Astrocyte of the cerebellum (primary cell): ENCODE measurements at regions of chr4 and their contacts with region 1.

Region 1: GRCh38 chr4:85543832-85544231 is 68.9 kb downstream of the ARHGAP24 start:
- DNase-seq: no peak
- H3K4me3 ChIP-seq: no peak overlapping the region
- CTCF ChIP-seq: no peak

Region 2: GRCh38 chr4:85457752-85458467 is 85.9 kb before region 1 on chr4:
- in situ Hi-C with region 1: no loop called
- DNase-seq: no peak
- H3K4me3 ChIP-seq: no peak overlapping the region
- CTCF ChIP-seq: no peak

Region 3: DNA sequence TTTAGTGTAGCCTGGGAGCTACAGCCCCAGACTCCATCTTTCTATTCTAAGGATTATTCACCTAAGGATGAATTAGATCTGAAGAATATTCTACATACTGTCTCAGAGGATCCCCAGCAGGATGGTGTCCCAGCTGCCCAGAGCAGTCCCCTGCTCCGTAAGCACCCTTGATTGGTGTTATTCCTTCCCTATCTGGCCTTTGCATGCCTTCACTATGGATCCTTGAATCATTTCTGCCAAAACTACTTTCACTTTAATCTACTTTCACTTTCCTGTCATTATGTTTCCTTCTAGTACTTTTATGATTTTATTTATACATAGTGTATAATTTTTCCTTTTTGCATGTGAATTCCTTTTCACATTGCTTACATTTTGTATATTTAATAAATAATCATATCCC is 29.7 kb before region 1 on chr4:
- in situ Hi-C with region 1: loop called (anchors 5 kb)
- DNase-seq: no peak
- H3K4me3 ChIP-seq: no peak overlapping the region
- CTCF ChIP-seq: no peak

Region 4: DNA sequence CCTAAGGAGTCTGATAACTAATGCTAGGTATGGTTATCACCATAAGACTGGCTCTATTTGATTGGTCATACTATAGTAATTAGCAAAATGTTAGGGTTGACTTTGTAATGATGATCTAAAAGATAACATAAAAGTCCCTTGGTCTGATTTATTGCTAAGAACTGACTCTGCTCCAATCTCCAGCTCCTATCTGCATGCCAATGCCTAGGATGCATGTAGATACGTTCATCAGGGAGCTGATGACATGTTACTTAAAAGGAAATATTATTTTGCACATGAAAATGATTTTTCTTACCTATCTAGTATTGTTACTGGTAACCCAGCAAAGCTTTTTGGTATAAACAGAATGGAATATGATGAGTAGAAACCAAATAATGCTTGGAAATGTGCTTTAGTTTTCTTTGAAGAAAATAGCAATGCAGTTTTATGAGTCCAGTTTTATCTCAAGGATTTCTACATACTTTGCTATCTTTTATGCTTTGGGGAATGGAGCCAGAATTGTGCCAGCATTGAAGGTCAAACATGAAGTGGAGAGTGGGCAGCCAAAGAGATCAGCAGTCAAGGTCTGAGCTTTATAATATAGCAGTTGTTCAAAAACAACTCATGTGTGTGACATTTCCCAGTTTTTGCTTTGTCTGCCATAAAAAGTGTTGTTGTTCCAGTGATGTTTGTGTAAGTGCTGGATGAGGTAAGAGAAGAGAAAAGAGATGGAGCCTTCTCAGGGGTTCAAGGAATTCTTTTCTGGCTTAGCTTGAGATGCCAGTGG is 52.1 kb after region 1 on chr4:
- in situ Hi-C with region 1: loop called (anchors 5 kb)
- DNase-seq: no peak
- H3K4me3 ChIP-seq: no peak overlapping the region
- CTCF ChIP-seq: no peak